Right ventricle myocardium inferior (tissue), 1 donor: ENCODE measurements at regions of chr11 and their contacts with region 1.

Region 1: GRCh38 chr11:123020968-123021367 is 39.3 kb upstream of the BSX start:
- DNase-seq: no peak
- ATAC-seq: no peak

Region 2: GRCh38 chr11:122863704-122864326 is 157.2 kb before region 1 on chr11:
- intact Hi-C with region 1: loop called (anchors 2 kb)
- DNase-seq: no peak
- ATAC-seq: no peak

Region 3: GRCh38 chr11:122910775-122911174 is 110.2 kb before region 1 on chr11:
- intact Hi-C with region 1: loop called (anchors 2 kb)
- DNase-seq: no peak
- ATAC-seq: no peak